Body of pancreas (tissue), 4 donors: ENCODE measurements at regions of chr20 and their contacts with region 1.

Region 1: DNA sequence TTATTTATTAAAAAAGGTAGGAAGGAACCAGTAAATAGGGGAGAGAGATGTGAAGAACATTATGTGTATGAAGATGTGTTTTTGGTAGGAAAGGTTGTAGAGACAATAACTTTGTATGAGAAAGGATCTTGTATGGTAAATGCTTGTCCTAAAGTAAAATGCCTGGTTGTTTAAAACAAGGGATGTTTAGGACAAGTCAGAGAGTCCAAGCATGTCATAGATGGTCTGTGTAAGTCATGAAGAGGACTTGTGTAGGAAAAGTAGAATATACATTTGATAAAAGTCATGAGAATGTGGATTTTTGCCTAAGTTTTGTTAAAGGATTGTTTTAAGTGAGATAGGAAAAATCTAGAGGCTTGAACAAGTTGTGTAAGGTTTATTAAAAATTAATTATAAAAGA is 325.1 kb downstream of the CDH26 start:
- DNase-seq: no peak
- ATAC-seq: no peak
- H3K4me3 ChIP-seq: no peak overlapping the region
- H3K27ac ChIP-seq: no peak overlapping the region
- H3K4me1 ChIP-seq: no peaks in the 10 kb centered on the region
- H3K27me3 ChIP-seq: no peaks in the 10 kb centered on the region
- CTCF ChIP-seq: no peak
- POLR2A ChIP-seq: no peak

Region 2: DNA sequence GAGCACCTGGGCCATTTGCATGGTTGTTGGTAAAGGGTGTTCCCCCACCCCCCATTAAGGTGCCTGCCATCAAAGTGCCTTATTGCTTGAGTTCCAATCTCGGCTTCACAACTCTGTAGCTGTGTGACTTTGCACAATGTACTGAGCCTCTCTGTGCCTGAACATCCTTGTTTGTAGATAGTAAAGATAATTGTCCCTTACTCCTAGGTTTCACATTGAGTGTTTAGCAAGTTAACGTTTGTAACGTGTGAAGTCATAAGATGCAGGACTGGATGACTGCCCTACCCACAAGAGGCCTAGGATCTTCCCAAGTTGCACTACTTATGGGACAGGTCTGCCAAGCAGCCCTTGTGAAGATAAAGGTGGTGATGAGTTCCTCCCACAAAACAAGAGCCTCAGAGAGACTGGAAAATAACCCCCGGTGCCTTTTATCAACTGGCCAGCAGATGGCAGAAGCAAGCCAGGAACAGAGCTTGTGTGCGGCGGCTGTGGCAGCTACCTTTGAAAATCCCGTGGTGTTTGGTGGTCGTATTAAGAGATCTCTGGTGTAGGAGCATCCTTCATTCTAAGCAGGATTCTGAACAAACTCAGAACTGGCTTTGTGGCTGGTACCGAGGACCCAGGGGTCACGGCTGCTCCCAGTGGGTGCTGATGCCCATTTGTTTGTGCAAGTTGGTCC is 226.0 kb before region 1 on chr20:
- intact Hi-C with region 1: no loop called
- DNase-seq: peak; percentile 47 to 63 (median 60)
- ATAC-seq: no peak
- H3K4me3 ChIP-seq: no peak overlapping the region
- H3K27ac ChIP-seq: no peak overlapping the region
- H3K4me1 ChIP-seq: peaks cover 9% of the 10 kb centered on the region
- H3K27me3 ChIP-seq: peaks cover 0 to 6% of the 10 kb centered on the region in 2 donors
- CTCF ChIP-seq: peak; percentile 62 to 83 (median 67)
- POLR2A ChIP-seq: no peak

Region 3: GRCh38 chr20:60078351-60079250 is 204.7 kb before region 1 on chr20:
- intact Hi-C with region 1: no loop called
- DNase-seq: no peak
- ATAC-seq: no peak
- H3K4me3 ChIP-seq: no peak overlapping the region
- H3K27ac ChIP-seq: no peak overlapping the region
- H3K4me1 ChIP-seq: no peaks in the 10 kb centered on the region
- H3K27me3 ChIP-seq: no peaks in the 10 kb centered on the region
- CTCF ChIP-seq: no peak
- POLR2A ChIP-seq: no peak

Region 4: GRCh38 chr20:60340247-60340646 is 57.0 kb after region 1 on chr20:
- intact Hi-C with region 1: no loop called
- DNase-seq: no peak
- ATAC-seq: no peak
- H3K4me3 ChIP-seq: no peak overlapping the region
- H3K27ac ChIP-seq: no peak overlapping the region
- H3K4me1 ChIP-seq: no peaks in the 10 kb centered on the region
- H3K27me3 ChIP-seq: no peaks in the 10 kb centered on the region
- CTCF ChIP-seq: no peak
- POLR2A ChIP-seq: no peak

Region 5: DNA sequence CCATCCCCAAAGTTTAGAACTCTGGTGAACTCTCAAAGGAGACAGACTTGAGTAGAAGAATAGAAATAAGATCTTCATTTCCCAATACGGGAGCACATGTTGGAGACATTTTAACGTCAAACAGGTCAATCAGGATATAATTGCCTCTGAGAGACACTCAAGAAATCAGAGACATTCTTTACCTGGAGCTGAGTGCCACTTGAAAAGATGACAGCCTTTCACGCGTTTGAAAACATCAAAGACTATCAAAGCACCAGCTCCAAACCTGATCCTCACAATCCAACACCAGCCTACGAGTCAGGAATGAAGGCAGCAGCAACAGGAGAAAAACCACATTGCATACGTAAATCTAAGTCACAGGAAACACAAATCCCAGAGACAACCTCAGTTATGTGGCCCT is 397.3 kb after region 1 on chr20:
- intact Hi-C with region 1: loop called (anchors 10 kb)
- DNase-seq: no peak
- ATAC-seq: no peak
- H3K4me3 ChIP-seq: no peak overlapping the region
- H3K27ac ChIP-seq: no peak overlapping the region
- H3K4me1 ChIP-seq: no peaks in the 10 kb centered on the region
- H3K27me3 ChIP-seq: no peaks in the 10 kb centered on the region
- CTCF ChIP-seq: no peak
- POLR2A ChIP-seq: no peak